ENCODE measurements at regions of chr9 and their contacts with region 1.

Region 1: DNA sequence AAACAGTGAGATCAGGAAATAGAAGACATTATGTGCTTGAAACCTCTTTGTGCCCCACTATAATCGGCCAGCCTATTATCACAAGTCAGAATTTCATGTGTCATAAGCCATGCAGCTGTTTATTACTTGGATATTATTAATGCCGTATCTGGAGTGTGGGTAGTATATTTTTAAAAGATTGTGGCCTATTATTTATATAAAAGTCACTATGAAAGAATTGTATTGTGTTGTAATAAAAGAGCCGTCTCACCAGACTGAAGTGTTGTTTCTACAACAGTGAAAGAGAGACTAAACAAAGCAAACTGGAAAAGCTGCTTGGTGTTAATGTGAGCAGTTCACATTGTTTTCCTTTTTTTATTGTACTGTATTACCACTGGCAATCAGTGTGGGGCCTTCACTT is 449.1 kb downstream of the PSAT1 start:
- DNase-seq: no peak
- H3K4me3 ChIP-seq: no peak overlapping the region
- H3K27ac ChIP-seq: no peak overlapping the region
- H3K4me1 ChIP-seq: no peaks in the 10 kb centered on the region
- H3K27me3 ChIP-seq: no peaks in the 10 kb centered on the region
- CTCF ChIP-seq: no peak
- POLR2A ChIP-seq: no peak

Region 2: GRCh38 chr9:78725503-78725902 is 20.5 kb before region 1 on chr9:
- intact Hi-C with region 1: loop called (anchors 2 kb)
- DNase-seq: no peak
- H3K4me3 ChIP-seq: no peak overlapping the region
- H3K27ac ChIP-seq: no peak overlapping the region
- H3K4me1 ChIP-seq: no peaks in the 10 kb centered on the region
- H3K27me3 ChIP-seq: no peaks in the 10 kb centered on the region
- CTCF ChIP-seq: no peak
- POLR2A ChIP-seq: no peak